Naive thymus-derived CD4-positive, alpha-beta T cell (primary cell): ENCODE measurements at regions of chr16 and their contacts with region 1.

Region 1: DNA sequence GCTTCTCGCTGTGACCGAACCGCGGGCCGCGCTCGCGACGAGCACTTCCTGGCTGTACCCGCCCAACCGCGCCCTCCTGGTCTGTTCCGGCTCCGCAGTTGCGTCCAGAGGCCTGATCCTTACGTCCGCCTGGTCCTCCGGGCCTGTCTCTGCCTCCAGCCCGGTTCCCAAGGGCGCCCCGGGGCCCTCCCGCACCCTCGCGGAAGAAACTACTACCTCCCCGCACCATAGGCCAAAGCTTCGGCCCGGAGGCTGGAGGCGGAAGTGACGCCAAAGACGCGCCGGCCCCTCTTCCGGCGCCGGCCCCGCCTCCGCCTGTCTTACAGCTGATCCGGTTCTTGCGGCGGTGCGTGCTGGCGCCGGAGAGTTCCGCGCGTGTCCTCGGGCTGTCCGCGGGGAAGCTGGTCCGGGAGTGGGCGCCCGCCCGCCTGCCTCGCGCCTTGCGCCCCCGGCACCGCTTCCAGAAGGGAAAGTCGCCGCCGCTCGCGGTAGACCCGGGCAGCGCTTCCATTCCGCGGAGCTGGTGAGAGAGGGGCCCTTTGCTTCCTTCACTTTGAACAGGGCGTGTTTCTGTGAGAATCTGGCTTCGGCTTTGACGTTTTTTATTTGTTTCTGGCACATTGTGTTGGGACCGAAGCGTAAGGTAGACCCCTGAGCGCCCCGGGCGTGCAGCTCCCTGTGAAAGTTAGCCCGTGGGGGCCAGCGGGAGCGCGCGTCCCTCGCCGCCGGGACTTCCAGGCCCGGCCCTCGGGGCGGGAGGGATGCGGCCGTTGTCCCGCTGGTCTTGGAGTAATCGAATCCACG is at the start of gene ZNF778:
- DNase-seq: peak; percentile 77 to 86 (median 84)
- ATAC-seq: peak; percentile 88
- H3K4me3 ChIP-seq: peak within 1 kb of the TSS; percentile 56
- H3K4me3 Mint-ChIP-seq: peak within 1 kb of the TSS; percentile 68 to 96 (median 92)
- H3K27ac ChIP-seq: peak within 1 kb of the TSS; percentile 99
- H3K27ac Mint-ChIP-seq: peak within 1 kb of the TSS; percentile 68 to 99 (median 86)
- H3K4me1 ChIP-seq: peaks cover 5 to 10% of the 10 kb centered on the region in 2 donors
- H3K4me1 Mint-ChIP-seq: peaks cover 12 to 39% (median 29%) of the 10 kb centered on the region in 7 donors
- H3K27me3 ChIP-seq: no peaks in the 10 kb centered on the region
- H3K27me3 Mint-ChIP-seq: no peaks in the 10 kb centered on the region
- total RNA-seq, gene ZNF778: 6.0 to 13.5 (median 6.5) TPM

Region 2: DNA sequence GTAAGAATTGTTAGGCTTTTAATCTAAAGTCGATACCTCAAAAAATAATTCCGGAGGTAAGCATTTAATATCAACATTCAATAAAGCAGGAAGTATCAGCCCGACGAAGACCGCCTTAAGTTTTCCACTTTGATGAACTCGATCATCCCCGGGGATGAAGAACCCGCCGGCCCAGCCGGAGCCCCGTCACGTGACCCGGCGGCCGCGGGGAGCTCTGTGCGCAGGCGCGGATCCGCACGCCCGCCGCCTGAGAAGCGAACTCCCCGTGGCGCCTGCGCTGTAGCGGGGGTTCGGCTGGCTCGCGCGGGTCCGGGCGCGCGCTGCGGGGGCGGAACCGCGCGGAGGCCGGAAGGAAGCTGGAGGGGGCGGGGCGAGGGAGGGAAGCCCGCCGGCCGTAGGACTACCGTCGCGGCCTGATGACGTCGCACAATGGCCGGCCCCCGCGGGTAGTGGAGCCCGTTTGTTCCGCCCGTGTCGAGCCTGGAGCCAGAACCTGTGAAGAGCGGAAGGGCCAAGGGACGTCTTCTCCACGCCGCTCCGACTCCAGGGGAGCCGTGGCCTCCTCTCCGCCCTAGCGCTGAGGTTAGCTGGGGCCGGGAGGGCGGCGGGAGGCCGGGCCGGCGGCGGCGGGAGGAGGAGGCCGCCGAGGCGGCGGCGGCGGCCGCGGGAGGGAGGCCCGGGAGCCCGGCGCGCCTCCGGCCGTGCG is 647.5 kb before region 1 on chr16 and contains the start of gene ZC3H18:
- CTCF ChIA-PET with region 1: no interaction called
- POLR2A ChIA-PET with region 1: no interaction called
- intact Hi-C with region 1: loop called (anchors 1 kb)
- DNase-seq: peak; percentile 93 to 99 (median 96)
- ATAC-seq: peak; percentile 99
- H3K4me3 ChIP-seq: peak within 1 kb of the TSS; percentile 84
- H3K4me3 Mint-ChIP-seq: peak within 1 kb of the TSS; percentile 81 to 93 (median 87)
- H3K27ac ChIP-seq: peak within 1 kb of the TSS; percentile 91
- H3K27ac Mint-ChIP-seq: peak within 1 kb of the TSS; percentile 45 to 93 (median 89)
- H3K4me1 ChIP-seq: peaks cover 21% of the 10 kb centered on the region in 2 donors
- H3K4me1 Mint-ChIP-seq: peaks cover 10 to 39% (median 34%) of the 10 kb centered on the region in 7 donors
- H3K27me3 ChIP-seq: no peaks in the 10 kb centered on the region
- H3K27me3 Mint-ChIP-seq: no peaks in the 10 kb centered on the region
- total RNA-seq, gene ZC3H18: 74.0 to 97.8 (median 82.6) TPM

Region 3: GRCh38 chr16:88743693-88744576 is 473.7 kb before region 1 on chr16:
- CTCF ChIA-PET with region 1: no interaction called
- POLR2A ChIA-PET with region 1: interaction called, 3 read pairs
- intact Hi-C with region 1: loop called (anchors 1 to 2 kb)
- DNase-seq: peak; percentile 55 to 81 (median 69)
- ATAC-seq: peak; percentile 71
- H3K4me3 ChIP-seq: no peak overlapping the region
- H3K4me3 Mint-ChIP-seq: peak overlapping the region in 3 of 10 donors; percentile 16 to 69 (median 44)
- H3K27ac ChIP-seq: no peak overlapping the region
- H3K27ac Mint-ChIP-seq: peak overlapping the region in 1 of 9 donors; percentile 29
- H3K4me1 ChIP-seq: peaks cover 22 to 31% of the 10 kb centered on the region in 2 donors
- H3K4me1 Mint-ChIP-seq: peaks cover 9 to 27% (median 17%) of the 10 kb centered on the region in 7 donors
- H3K27me3 ChIP-seq: no peaks in the 10 kb centered on the region
- H3K27me3 Mint-ChIP-seq: no peaks in the 10 kb centered on the region

Region 4: GRCh38 chr16:88941913-88942909 is 275.4 kb before region 1 on chr16:
- CTCF ChIA-PET with region 1: interaction called, 8 read pairs
- POLR2A ChIA-PET with region 1: interaction called, 3 read pairs
- intact Hi-C with region 1: loop called (anchors 1 kb)
- DNase-seq: peak; percentile 21 to 67 (median 51)
- ATAC-seq: peak; percentile 76
- H3K4me3 ChIP-seq: no peak overlapping the region
- H3K4me3 Mint-ChIP-seq: peak overlapping the region; percentile 27 to 84 (median 52)
- H3K27ac ChIP-seq: no peak overlapping the region
- H3K27ac Mint-ChIP-seq: peak overlapping the region in 2 of 9 donors; percentile 1 to 41
- H3K4me1 ChIP-seq: peaks cover 3 to 6% of the 10 kb centered on the region in 2 donors
- H3K4me1 Mint-ChIP-seq: peaks cover 0 to 19% (median 5%) of the 10 kb centered on the region in 7 donors
- H3K27me3 ChIP-seq: peaks cover 0 to 15% of the 10 kb centered on the region in 2 donors
- H3K27me3 Mint-ChIP-seq: peaks cover 17 to 44% (median 25%) of the 10 kb centered on the region in 5 donors

Region 5: DNA sequence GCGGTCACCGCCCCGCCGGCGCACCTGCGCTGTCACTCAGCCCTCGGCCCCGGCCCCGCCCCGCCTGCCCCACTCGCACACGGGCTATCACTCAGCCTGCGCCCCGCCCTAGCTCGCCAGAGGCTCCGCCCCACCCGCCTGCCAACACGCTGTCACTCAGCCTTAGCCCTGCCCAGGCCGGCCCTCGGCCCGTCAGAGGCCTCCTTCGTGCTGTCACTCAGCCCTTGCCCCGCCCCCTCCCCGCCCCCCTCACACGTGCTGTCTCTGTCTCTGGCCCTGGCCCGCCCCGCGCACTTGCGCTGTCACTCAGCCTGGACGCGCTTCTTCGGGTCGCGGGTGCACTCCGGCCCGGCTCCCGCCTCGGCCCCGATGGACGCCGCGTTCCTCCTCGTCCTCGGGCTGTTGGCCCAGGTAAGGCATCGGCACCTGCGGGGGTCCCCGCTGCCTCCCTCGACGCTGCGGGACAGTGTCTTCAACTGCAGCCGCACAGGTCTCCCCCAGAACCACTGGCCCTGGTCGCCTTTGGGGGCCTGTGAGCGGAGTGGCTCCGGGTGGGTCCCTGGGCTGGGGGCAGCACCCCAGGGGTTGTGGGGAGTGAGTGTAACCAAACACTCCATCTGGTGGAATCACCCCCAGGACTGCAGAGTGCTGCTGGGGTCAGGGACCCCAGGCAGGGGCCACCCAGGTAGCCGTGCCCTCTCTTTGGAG is 46.0 kb before region 1 on chr16 and contains the start of gene CDH15:
- CTCF ChIA-PET with region 1: interaction called, 3 read pairs
- POLR2A ChIA-PET with region 1: no interaction called
- intact Hi-C with region 1: loop called (anchors 1 kb)
- DNase-seq: peak; percentile 79 to 96 (median 91)
- ATAC-seq: peak; percentile 97
- H3K4me3 ChIP-seq: peak within 1 kb of the TSS; percentile 51
- H3K4me3 Mint-ChIP-seq: peak within 1 kb of the TSS; percentile 65 to 88 (median 76)
- H3K27ac ChIP-seq: no peak within 1 kb of the TSS
- H3K27ac Mint-ChIP-seq: peak within 1 kb of the TSS in 5 of 9 donors; percentile 51 to 86 (median 75)
- H3K4me1 ChIP-seq: peaks cover 8 to 21% of the 10 kb centered on the region in 2 donors
- H3K4me1 Mint-ChIP-seq: peaks cover 6 to 10% (median 7%) of the 10 kb centered on the region in 7 donors
- H3K27me3 ChIP-seq: no peaks in the 10 kb centered on the region
- H3K27me3 Mint-ChIP-seq: peaks cover 0 to 6% (median 0%) of the 10 kb centered on the region in 5 donors
- total RNA-seq, gene CDH15: not detected

Region 6: GRCh38 chr16:89246903-89247733 is 29.5 kb after region 1 on chr16:
- CTCF ChIA-PET with region 1: no interaction called
- POLR2A ChIA-PET with region 1: interaction called, 3 read pairs
- intact Hi-C with region 1: loop called in 1 of 2 experiments (anchors 1 kb)
- DNase-seq: peak; percentile 85 to 99 (median 93)
- ATAC-seq: peak; percentile 99
- H3K4me3 ChIP-seq: peak overlapping the region; percentile 17
- H3K4me3 Mint-ChIP-seq: peak overlapping the region; percentile 70 to 92 (median 78)
- H3K27ac ChIP-seq: peak overlapping the region; percentile 62
- H3K27ac Mint-ChIP-seq: peak overlapping the region in 5 of 9 donors; percentile 40 to 89 (median 76)
- H3K4me1 ChIP-seq: peaks cover 0 to 5% of the 10 kb centered on the region in 2 donors
- H3K4me1 Mint-ChIP-seq: peaks cover 3 to 31% (median 21%) of the 10 kb centered on the region in 7 donors
- H3K27me3 ChIP-seq: no peaks in the 10 kb centered on the region
- H3K27me3 Mint-ChIP-seq: peaks cover 0 to 6% (median 0%) of the 10 kb centered on the region in 5 donors

Region 7: GRCh38 chr16:89257281-89257731 is 39.7 kb after region 1 on chr16:
- CTCF ChIA-PET with region 1: no interaction called
- POLR2A ChIA-PET with region 1: no interaction called
- intact Hi-C with region 1: no loop called
- DNase-seq: no peak
- ATAC-seq: peak; percentile 19
- H3K4me3 ChIP-seq: peak overlapping the region; percentile 52
- H3K4me3 Mint-ChIP-seq: peak overlapping the region; percentile 44 to 85 (median 78)
- H3K27ac ChIP-seq: peak overlapping the region; percentile 19
- H3K27ac Mint-ChIP-seq: peak overlapping the region in 5 of 9 donors; percentile 22 to 74 (median 46)
- H3K4me1 ChIP-seq: peaks cover 10 to 13% of the 10 kb centered on the region in 2 donors
- H3K4me1 Mint-ChIP-seq: peaks cover 14 to 25% (median 19%) of the 10 kb centered on the region in 7 donors
- H3K27me3 ChIP-seq: peaks cover 4% of the 10 kb centered on the region in 2 donors
- H3K27me3 Mint-ChIP-seq: peaks cover 14 to 37% (median 15%) of the 10 kb centered on the region in 5 donors